B cell (primary cell): ENCODE measurements at regions of chr3 and their contacts with region 1.

Region 1: GRCh38 chr3:18531662-18532236 is 106.6 kb upstream of the SATB1 start:
- DNase-seq: peak; percentile 26
- ATAC-seq: peak; percentile 80
- H3K4me3 ChIP-seq: no peak overlapping the region
- H3K4me3 Mint-ChIP-seq: peak overlapping the region; percentile 15
- H3K27ac ChIP-seq: peak overlapping the region; percentile 32 to 68
- H3K27ac Mint-ChIP-seq: peak overlapping the region; percentile 28
- H3K4me1 ChIP-seq: peaks cover 25 to 42% of the 10 kb centered on the region in 2 donors
- H3K4me1 Mint-ChIP-seq: peaks cover 43% of the 10 kb centered on the region
- H3K27me3 ChIP-seq: no peaks in the 10 kb centered on the region
- H3K27me3 Mint-ChIP-seq: no peaks in the 10 kb centered on the region
- CTCF ChIP-seq: no peak

Region 2: DNA sequence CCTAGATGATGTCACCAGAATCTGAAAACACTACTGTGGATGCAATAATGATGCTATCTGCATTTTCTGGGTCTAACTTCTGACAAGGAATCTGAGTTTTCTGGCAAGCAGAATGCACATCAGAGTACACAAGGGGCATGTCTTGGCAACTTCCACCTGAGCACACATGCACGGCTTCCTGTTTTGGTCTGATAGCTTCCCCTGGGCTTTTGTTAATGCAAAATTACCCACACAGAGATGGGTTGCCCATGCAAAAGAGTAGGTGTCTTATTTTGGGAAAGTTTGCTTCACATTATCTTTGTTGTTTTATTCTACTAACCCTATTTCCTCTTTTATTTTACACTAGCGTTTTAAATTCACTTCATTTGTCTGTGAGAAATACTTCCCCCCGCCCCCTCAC is 32.4 kb before region 1 on chr3:
- CTCF ChIA-PET with region 1: no interaction called
- POLR2A ChIA-PET with region 1: no interaction called
- intact Hi-C with region 1: loop called (anchors 5 kb)
- DNase-seq: peak; percentile 83
- ATAC-seq: peak; percentile 99
- H3K4me3 ChIP-seq: peak overlapping the region in 2 of 5 experiments; percentile 4 to 43
- H3K4me3 Mint-ChIP-seq: peak overlapping the region; percentile 56
- H3K27ac ChIP-seq: peak overlapping the region; percentile 19 to 72
- H3K27ac Mint-ChIP-seq: peak overlapping the region; percentile 73
- H3K4me1 ChIP-seq: peaks cover 17 to 38% of the 10 kb centered on the region in 2 donors
- H3K4me1 Mint-ChIP-seq: peaks cover 41% of the 10 kb centered on the region
- H3K27me3 ChIP-seq: no peaks in the 10 kb centered on the region
- H3K27me3 Mint-ChIP-seq: no peaks in the 10 kb centered on the region
- CTCF ChIP-seq: no peak